H1 (cell line): ENCODE measurements at regions of chr9 and their contacts with region 1.

Region 1: GRCh38 chr9:136949817-136950655 is 2.0 kb upstream of the LCN12 start:
- DNase-seq: peak; percentile 84 to 99
- H3K4me3 ChIP-seq: peak overlapping the region; percentile 36 to 55 (median 49)
- H3K27ac ChIP-seq: peak overlapping the region; percentile 20; the same call in 1 of the 2 replicates
- H3K4me1 ChIP-seq: peaks cover 0 to 16% (median 11%) of the 10 kb centered on the region in 4 experiments; a peak in 5 of 7 replicates
- H3K27me3 ChIP-seq: no peaks in the 10 kb centered on the region
- CTCF ChIP-seq: no peak
- EP300 ChIP-seq: no peak
- POLR2A ChIP-seq: peak in 1 of 2 experiments; percentile 29; a peak in 1 of 3 replicates
- RAD21 ChIP-seq: no peak

Region 2: DNA sequence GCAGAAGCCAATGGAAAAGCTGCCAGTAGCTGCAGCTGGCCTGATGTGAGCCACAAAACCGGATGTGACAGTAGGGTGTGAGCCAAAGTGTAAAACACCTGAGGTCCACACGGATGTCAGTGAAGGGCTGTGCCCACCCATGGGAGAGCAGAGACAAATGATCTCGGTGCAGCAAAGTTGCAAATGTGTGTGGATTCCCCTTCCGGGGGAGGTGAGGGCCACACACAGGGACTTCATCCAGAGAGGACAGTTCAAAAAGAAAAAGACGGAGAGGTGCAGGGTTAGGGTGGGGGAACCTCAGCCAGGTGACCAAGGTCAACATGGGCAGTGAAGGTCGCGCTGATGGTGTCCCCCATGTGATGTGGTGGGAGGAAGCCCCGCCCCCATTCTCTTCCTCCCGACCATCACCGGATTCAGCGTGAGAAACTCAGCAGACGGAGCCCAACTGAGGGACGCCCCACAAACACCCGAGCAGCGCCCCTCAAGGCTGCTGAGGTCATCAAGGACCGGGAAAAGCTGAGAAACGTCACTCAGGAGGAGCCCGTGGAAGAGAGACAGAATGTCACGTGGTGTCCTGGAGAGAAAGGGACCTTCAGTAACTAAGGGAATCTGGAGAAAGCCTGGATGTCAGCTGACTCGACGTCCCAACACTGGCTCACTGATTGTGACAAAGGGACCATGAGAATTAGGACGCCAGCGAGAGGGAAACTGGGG is 15.9 kb after region 1 on chr9:
- CTCF ChIA-PET with region 1: interaction called, 31 read pairs
- POLR2A ChIA-PET with region 1: interaction called, 5 read pairs
- DNase-seq: no peak
- H3K4me3 ChIP-seq: no peak overlapping the region
- H3K27ac ChIP-seq: no peak overlapping the region
- H3K4me1 ChIP-seq: peaks cover 0 to 7% (median 5%) of the 10 kb centered on the region in 4 experiments; a peak in 4 of 7 replicates
- H3K27me3 ChIP-seq: no peaks in the 10 kb centered on the region
- CTCF ChIP-seq: no peak
- EP300 ChIP-seq: no peak
- POLR2A ChIP-seq: no peak
- RAD21 ChIP-seq: no peak

Region 3: DNA sequence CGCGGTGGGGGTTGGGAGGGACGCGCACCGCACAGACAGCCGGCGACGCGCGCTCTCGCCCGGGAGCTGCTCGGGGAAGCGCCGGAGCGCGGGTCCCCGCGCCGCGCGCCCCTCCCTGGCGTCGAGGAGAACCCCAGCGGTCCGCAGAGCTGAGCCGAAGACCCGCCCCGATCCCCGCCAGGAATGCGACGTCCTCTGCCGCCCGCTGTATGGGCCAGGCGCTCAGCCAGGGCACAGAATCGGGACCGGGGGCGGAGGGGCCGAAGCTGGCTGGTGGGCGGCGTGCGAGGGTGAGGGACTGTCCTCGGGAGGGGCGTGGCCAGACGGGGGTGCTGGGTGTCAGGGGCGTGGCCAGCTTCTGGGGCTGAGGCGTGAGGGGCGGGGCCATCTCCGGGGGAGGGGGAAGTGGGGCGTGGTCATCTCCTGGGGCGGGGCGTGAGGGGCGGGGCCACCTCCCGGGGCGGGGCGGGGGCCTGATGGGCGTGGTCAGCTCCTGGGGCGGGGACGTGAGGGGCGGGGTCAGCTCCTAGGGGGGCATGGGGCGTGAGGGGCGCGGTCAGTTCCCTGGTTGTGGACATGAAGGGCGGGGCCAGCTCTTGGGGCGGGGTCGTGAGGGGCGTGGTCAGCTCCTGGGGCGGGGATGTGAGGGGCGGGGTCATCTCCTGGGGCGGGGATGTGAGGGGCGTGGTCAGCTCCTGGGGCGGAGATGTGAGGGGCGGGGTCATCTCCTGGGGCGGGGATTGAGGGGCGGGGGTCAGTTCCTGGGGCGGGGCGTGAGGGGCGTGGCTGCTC is 28.2 kb after region 1 on chr9:
- CTCF ChIA-PET with region 1: interaction called, 45 read pairs
- POLR2A ChIA-PET with region 1: interaction called, 5 read pairs
- DNase-seq: peak; percentile 68 to 98
- H3K4me3 ChIP-seq: peak overlapping the region; percentile 43 to 73 (median 52)
- H3K27ac ChIP-seq: no peak overlapping the region
- H3K4me1 ChIP-seq: peaks cover 0 to 12% (median 5%) of the 10 kb centered on the region in 4 experiments; a peak in 5 of 7 replicates
- H3K27me3 ChIP-seq: peaks cover 0 to 5% (median 2%) of the 10 kb centered on the region in 4 experiments; a peak in 2 of 7 replicates
- CTCF ChIP-seq: no peak
- EP300 ChIP-seq: no peak
- POLR2A ChIP-seq: no peak
- RAD21 ChIP-seq: no peak

Region 4: DNA sequence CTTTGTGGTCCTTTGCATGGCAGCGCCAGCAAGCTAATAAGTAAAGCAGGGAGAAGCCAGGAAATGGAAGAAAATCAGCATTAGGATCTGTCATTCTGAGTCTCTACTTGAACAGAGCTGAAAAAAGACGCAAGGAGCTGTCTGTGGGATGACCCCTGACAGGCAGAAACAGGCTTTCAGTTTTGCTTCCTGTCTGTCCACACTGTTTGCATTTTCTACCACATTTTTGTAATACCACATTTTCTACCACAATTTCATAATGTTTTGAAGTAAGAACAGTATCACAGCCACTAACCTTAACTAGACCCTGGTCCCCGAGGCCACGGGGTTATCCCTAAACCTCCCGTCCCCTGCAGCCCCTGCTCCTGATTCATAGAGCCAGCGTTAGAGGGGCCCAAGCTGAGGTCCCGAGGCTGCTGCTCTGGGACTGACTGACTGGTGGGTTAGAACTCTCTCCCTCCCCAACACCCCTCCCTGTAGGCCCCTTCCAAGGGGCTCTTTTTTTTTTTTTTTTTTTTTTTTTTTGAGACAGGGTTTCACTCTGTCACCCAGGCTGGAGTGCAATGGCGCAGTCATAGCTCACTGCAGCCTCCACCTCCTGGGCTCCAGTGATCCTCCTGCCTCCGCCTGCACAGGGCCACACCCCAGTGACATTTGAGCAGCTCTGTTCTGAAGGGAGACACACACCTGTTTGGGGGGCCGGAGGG is 50.3 kb after region 1 on chr9:
- CTCF ChIA-PET with region 1: interaction called, 10 read pairs
- POLR2A ChIA-PET with region 1: no interaction called
- DNase-seq: no peak
- H3K4me3 ChIP-seq: no peak overlapping the region
- H3K27ac ChIP-seq: no peak overlapping the region
- H3K4me1 ChIP-seq: peaks cover 0 to 16% (median 8%) of the 10 kb centered on the region in 4 experiments; a peak in 6 of 7 replicates
- H3K27me3 ChIP-seq: no peaks in the 10 kb centered on the region; a peak in 1 of 7 replicates
- CTCF ChIP-seq: no peak
- EP300 ChIP-seq: no peak
- POLR2A ChIP-seq: no peak
- RAD21 ChIP-seq: no peak

Region 5: DNA sequence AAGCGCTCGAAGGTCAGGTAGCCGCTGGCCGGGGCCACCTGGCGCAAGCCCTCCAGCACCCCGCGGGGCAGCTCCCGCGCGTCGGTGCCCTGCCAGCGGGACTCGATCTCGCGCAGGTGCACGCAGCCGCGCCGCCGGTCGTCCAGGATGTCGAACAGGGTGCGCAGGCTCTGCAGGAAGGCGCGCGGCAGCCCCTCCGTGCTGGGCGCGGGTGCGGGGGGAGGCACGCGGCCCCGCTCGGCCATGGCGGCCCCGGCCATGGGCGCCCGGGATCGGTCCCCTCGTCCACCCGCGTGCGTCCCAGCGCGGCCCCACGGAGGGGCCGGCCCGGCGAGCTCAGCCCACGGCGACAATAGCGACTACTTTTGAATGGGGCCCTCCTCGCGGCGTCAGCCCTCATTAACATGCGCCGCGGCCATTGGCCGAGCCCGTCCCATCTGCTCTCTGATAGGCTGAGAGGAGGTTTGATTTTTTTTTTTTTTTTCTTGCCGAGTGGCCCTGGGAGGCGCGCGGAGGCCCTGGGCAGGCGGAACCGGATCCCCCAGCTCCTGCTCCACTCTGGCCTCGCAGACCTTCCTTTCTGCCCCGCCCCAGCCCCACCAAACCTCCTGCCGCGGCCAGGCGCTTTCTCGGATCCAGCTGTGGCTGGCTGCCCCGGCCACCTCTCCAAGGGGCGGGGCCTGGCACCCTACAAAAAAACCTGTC is 120.3 kb after region 1 on chr9 and contains the start of gene SAPCD2:
- CTCF ChIA-PET with region 1: interaction called, 13 read pairs
- POLR2A ChIA-PET with region 1: no interaction called
- DNase-seq: peak; percentile 75 to 84
- H3K4me3 ChIP-seq: peak within 1 kb of the TSS; percentile 46 to 64 (median 48)
- H3K27ac ChIP-seq: no peak within 1 kb of the TSS; the same call in 1 of the 2 replicates
- H3K4me1 ChIP-seq: peaks cover 0 to 27% (median 21%) of the 10 kb centered on the region in 4 experiments; a peak in 6 of 7 replicates
- H3K27me3 ChIP-seq: peaks cover 0 to 18% (median 7%) of the 10 kb centered on the region in 4 experiments; a peak in 5 of 7 replicates
- CTCF ChIP-seq: no peak
- EP300 ChIP-seq: 0 out of 3 replicates have a peak, but pooled peaks of 1 of the 2 experiments have one; percentile 18
- POLR2A ChIP-seq: peak in 1 of 2 experiments; percentile 49; a peak in 1 of 3 replicates
- RAD21 ChIP-seq: no peak
- total RNA-seq, gene SAPCD2: 30.3 and 32.1 TPM in 2 replicates